Body of pancreas (tissue), 4 donors: ENCODE measurements at regions of chr3 and their contacts with region 1.

Region 1: GRCh38 chr3:144770915-144771351 is 799.3 kb downstream of the DIPK2A start:
- DNase-seq: no peak
- ATAC-seq: peak; percentile 55
- H3K4me3 ChIP-seq: no peak overlapping the region
- H3K27ac ChIP-seq: no peak overlapping the region
- H3K4me1 ChIP-seq: no peaks in the 10 kb centered on the region
- H3K27me3 ChIP-seq: no peaks in the 10 kb centered on the region
- CTCF ChIP-seq: peak; percentile 1 to 60 (median 48)
- POLR2A ChIP-seq: no peak

Region 2: GRCh38 chr3:143885780-143886427 is 885.0 kb before region 1 on chr3:
- intact Hi-C with region 1: loop called (anchors 10 kb)
- DNase-seq: peak; percentile 15 to 38 (median 26)
- ATAC-seq: no peak
- H3K4me3 ChIP-seq: no peak overlapping the region
- H3K27ac ChIP-seq: no peak overlapping the region
- H3K4me1 ChIP-seq: no peaks in the 10 kb centered on the region
- H3K27me3 ChIP-seq: no peaks in the 10 kb centered on the region
- CTCF ChIP-seq: peak; percentile 52 to 66 (median 61)
- POLR2A ChIP-seq: no peak

Region 3: GRCh38 chr3:144252896-144253295 is 518.0 kb before region 1 on chr3:
- intact Hi-C with region 1: no loop called
- DNase-seq: no peak
- ATAC-seq: no peak
- H3K4me3 ChIP-seq: no peak overlapping the region
- H3K27ac ChIP-seq: no peak overlapping the region
- H3K4me1 ChIP-seq: no peaks in the 10 kb centered on the region
- H3K27me3 ChIP-seq: no peaks in the 10 kb centered on the region
- CTCF ChIP-seq: no peak
- POLR2A ChIP-seq: no peak